GM13976 (cell line): ENCODE measurements at regions of chr1 and their contacts with region 1.

Region 1: GRCh38 chr1:212368073-212368484 is 46.6 kb downstream of the PACC1 start:
- DNase-seq: peak; percentile 71
- CTCF ChIP-seq: peak; percentile 62

Region 2: DNA sequence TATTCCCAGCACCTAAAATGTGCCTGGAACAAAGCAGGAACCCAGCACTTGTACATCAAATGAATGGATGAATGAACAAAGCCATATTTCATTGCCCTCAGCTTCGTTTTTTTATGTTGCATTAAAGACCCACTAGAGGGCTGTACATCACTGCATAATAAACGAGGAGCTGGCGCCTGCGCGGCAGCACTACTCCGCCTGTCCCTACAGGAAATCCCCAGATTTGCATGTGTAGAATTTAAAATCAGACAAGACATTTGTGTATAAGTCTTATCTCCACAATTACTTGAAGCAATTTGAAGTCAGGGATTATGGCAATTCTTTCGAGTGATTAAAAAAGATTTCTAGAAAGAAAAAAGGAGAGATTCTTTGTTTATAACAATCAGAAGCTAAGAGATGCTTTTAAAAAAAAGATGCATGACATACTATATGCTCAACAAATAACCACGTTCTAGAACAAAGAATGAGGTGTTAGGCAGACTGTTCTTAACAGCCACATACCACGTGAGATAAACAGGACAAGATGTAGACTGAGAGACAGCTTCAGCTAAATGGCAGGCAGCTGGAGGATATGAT is 687.2 kb before region 1 on chr1:
- in situ Hi-C with region 1: loop called (anchors 25 kb)
- DNase-seq: peak; percentile 80
- CTCF ChIP-seq: peak; percentile 60

Region 3: GRCh38 chr1:212062832-212063438 is 305.1 kb before region 1 on chr1:
- in situ Hi-C with region 1: loop called (anchors 25 kb)
- DNase-seq: peak; percentile 32
- CTCF ChIP-seq: peak; percentile 17